HAP-1 (cell line): ENCODE measurements at regions of chr2 and their contacts with region 1.

Region 1: GRCh38 chr2:99180755-99181623 is at the starts of genes MITD1 and MRPL30:
- DNase-seq: peak; percentile 93
- H3K4me3 ChIP-seq: peak within 1 kb of the TSS; percentile 73
- H3K4me1 ChIP-seq: peaks cover 7% of the 10 kb centered on the region
- H3K27me3 ChIP-seq: no peaks in the 10 kb centered on the region

Region 2: DNA sequence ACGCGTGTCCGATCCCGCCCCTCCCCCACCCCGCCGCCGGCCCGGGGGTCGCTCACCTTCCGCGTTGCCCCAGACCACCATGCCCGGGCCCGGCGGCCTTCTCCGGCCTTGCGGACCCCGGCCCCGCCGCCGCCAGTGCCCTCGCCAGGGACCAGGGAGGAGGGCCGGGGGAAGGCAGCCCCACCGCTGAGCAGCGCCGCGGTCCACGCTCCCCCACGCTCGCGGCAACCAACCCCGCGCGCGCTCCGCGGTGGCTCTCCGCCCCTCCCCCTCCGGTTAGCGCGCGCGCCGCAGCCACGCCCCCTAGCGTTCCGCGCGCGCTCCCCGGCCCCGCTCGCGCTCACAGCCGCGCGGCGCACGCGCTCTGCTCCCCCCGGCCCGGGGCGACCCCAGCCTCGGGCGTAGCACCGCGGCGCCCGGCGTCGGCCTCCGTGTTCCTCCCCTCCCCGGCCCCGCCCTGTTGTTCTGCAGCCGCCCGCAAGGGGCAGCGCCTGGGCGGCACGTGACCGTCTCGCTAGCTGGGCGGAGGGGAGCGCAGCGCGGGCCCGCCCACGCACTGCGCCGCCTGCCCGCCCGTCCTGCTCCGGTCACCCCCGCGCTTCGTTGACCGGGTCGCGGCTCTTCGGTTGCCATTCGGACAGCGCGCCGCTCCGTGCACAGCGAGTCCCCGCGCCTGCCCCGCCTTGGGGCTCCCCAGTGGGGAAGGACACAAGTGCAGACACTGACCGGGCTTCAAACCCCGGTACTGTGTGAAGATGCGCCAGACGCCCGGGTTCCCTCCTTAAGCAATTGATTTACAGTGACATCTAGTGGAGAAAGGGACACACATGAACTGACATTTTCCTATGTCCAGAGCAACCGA is 309.0 kb after region 1 on chr2 and contains the start of gene REV1:
- in situ Hi-C with region 1: loop called (anchors 25 kb)
- DNase-seq: peak; percentile 90 to 96
- H3K4me3 ChIP-seq: peak within 1 kb of the TSS; percentile 80
- H3K4me1 ChIP-seq: peaks cover 15% of the 10 kb centered on the region
- H3K27me3 ChIP-seq: peaks cover 3% of the 10 kb centered on the region; the same call in 1 of the 2 replicates